ENCODE measurements at regions of chr9 and their contacts with region 1.

Region 1: GRCh38 chr9:107523546-107523945 is 34.0 kb upstream of the KLF4 start:
- DNase-seq: no peak
- ATAC-seq: no peak
- H3K4me3 ChIP-seq: no peak overlapping the region
- H3K27ac ChIP-seq: no peak overlapping the region
- H3K4me1 ChIP-seq: no peaks in the 10 kb centered on the region
- H3K27me3 ChIP-seq: 0 out of 5 replicates have a peak, but pooled peaks cover 0 to 7% of the 10 kb centered on the region in 2 experiments
- CTCF ChIP-seq: no peak
- EP300 ChIP-seq: no peak
- POLR2A ChIP-seq: no peak
- RAD21 ChIP-seq: no peak

Region 2: GRCh38 chr9:107587191-107587963 is 63.8 kb after region 1 on chr9:
- CTCF ChIA-PET with region 1: no interaction called
- POLR2A ChIA-PET with region 1: no interaction called
- in situ Hi-C with region 1: no loop called
- intact Hi-C with region 1: loop called (anchors 10 kb)
- DNase-seq: no peak
- ATAC-seq: peak; percentile 81
- H3K4me3 ChIP-seq: peak overlapping the region; percentile 5 to 52 (median 26); a peak in 5 of 6 replicates
- H3K27ac ChIP-seq: no peak overlapping the region
- H3K4me1 ChIP-seq: peaks cover 20% of the 10 kb centered on the region
- H3K27me3 ChIP-seq: peaks cover 0 to 3% of the 10 kb centered on the region in 2 experiments; a peak in 2 of 5 replicates
- CTCF ChIP-seq: no peak
- EP300 ChIP-seq: no peak
- POLR2A ChIP-seq: no peak
- RAD21 ChIP-seq: no peak

Measured in HepG2 (cell line).